ENCODE measurements at regions of chr5 and their contacts with region 1.

Region 1: GRCh38 chr5:179623003-179623880 is at the start of gene HNRNPH1:
- H3K4me3 ChIP-seq: peak within 1 kb of the TSS; percentile 99
- H3K27ac ChIP-seq: peak within 1 kb of the TSS; percentile 98
- H3K4me1 ChIP-seq: peaks cover 10% of the 10 kb centered on the region
- CTCF ChIP-seq: no peak; the same call in 1 of the 2 replicates

Region 2: GRCh38 chr5:179550511-179551230 is 72.6 kb before region 1 on chr5 and contains the start of gene RUFY1:
- CTCF ChIA-PET with region 1: no interaction called
- POLR2A ChIA-PET with region 1: interaction called, 20 read pairs
- H3K4me3 ChIP-seq: peak within 1 kb of the TSS; percentile 82
- H3K27ac ChIP-seq: peak within 1 kb of the TSS; percentile 90
- H3K4me1 ChIP-seq: peaks cover 3% of the 10 kb centered on the region; the same call in 1 of the 2 replicates
- CTCF ChIP-seq: no peak

Region 3: GRCh38 chr5:179559284-179560252 is 63.7 kb before region 1 on chr5:
- CTCF ChIA-PET with region 1: no interaction called
- POLR2A ChIA-PET with region 1: interaction called, 27 read pairs
- H3K4me3 ChIP-seq: peak overlapping the region; percentile 84
- H3K27ac ChIP-seq: peak overlapping the region; percentile 75
- H3K4me1 ChIP-seq: peaks cover 6% of the 10 kb centered on the region; the same call in 1 of the 2 replicates
- CTCF ChIP-seq: no peak; the same call in none of the 2 replicates

Region 4: DNA sequence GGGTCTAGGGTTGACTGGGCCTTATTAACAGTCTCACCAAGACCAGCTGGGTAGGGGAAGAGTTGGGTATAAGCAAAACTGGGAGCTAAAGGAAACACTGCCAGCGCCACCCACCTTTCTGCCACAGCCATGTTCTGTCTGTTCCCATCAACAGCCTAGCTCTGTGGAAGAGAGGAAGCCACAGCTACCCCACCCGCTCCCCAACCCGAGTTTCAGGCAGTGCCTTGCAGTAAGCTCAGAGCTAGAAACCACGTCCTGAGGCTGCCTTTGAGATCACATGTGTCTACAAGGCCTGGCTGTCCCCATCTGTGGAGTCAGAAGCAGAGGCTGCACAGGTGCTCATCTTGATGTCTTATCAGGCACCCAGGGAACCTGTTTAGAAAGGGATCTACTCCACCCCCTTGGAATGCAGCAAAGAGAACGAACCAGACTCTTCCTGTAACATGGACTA is 15.1 kb before region 1 on chr5:
- CTCF ChIA-PET with region 1: interaction called, 4 read pairs
- POLR2A ChIA-PET with region 1: interaction called, 94 read pairs
- H3K4me3 ChIP-seq: no peak overlapping the region
- H3K27ac ChIP-seq: no peak overlapping the region
- H3K4me1 ChIP-seq: no peaks in the 10 kb centered on the region
- CTCF ChIP-seq: no peak

Region 5: GRCh38 chr5:179668391-179668790 is 45.1 kb after region 1 on chr5:
- CTCF ChIA-PET with region 1: interaction called, 5 read pairs
- POLR2A ChIA-PET with region 1: interaction called, 10 read pairs
- H3K4me3 ChIP-seq: no peak overlapping the region
- H3K27ac ChIP-seq: no peak overlapping the region
- H3K4me1 ChIP-seq: no peaks in the 10 kb centered on the region
- CTCF ChIP-seq: peak; percentile 91

Region 6: DNA sequence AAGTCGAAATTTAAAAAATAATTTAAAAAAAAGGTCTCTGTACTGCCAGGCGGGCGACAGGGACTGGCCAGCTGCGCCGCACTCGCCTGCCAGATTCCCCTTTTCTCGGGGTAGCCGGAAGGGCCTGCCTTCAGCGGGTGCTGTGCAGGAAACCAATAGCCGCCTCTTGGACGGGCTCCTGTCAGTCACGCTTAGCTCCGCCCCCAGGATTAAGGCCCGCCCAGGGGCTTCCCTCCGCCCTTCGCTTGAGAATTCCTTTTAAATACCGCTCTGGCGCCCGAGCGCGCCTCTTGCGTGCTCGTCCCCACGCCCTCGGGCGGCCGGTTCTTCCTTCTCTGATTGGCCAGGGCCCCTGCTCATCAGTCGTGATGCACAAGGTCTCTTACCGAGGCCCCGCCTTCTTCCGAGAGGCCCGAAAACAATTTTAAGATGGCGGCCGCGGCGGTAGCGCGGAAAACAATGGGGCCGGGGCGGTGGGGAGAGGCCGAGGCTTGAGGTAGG is 109.2 kb after region 1 on chr5 and contains the start of gene MAML1:
- CTCF ChIA-PET with region 1: no interaction called
- POLR2A ChIA-PET with region 1: interaction called, 16 read pairs
- H3K4me3 ChIP-seq: peak within 1 kb of the TSS; percentile 92
- H3K27ac ChIP-seq: peak within 1 kb of the TSS; percentile 97
- H3K4me1 ChIP-seq: peaks cover 8% of the 10 kb centered on the region
- CTCF ChIP-seq: no peak

Region 7: GRCh38 chr5:180433032-180433422 is 809.8 kb after region 1 on chr5:
- CTCF ChIA-PET with region 1: no interaction called
- POLR2A ChIA-PET with region 1: interaction called, 15 read pairs
- H3K4me3 ChIP-seq: no peak overlapping the region
- H3K27ac ChIP-seq: no peak overlapping the region
- H3K4me1 ChIP-seq: no peaks in the 10 kb centered on the region
- CTCF ChIP-seq: no peak

Measured in HEK293 (cell line).